B cell (primary cell): ENCODE measurements at regions of chr4 and their contacts with region 1.

Region 1: GRCh38 chr4:88523325-88524129 is at the start of gene PYURF:
- DNase-seq: peak; percentile 82
- ATAC-seq: peak; percentile 92
- H3K4me3 ChIP-seq: peak within 1 kb of the TSS; percentile 66 to 88 (median 68)
- H3K4me3 Mint-ChIP-seq: peak within 1 kb of the TSS; percentile 90
- H3K27ac ChIP-seq: peak within 1 kb of the TSS; percentile 28 to 70
- H3K27ac Mint-ChIP-seq: peak within 1 kb of the TSS; percentile 87
- H3K4me1 ChIP-seq: peaks cover 12 to 18% of the 10 kb centered on the region in 2 donors
- H3K4me1 Mint-ChIP-seq: peaks cover 20% of the 10 kb centered on the region
- H3K27me3 ChIP-seq: no peaks in the 10 kb centered on the region
- H3K27me3 Mint-ChIP-seq: no peaks in the 10 kb centered on the region
- CTCF ChIP-seq: no peak
- total RNA-seq, gene PYURF: 38.1 and 40.5 TPM in 2 replicates

Region 2: DNA sequence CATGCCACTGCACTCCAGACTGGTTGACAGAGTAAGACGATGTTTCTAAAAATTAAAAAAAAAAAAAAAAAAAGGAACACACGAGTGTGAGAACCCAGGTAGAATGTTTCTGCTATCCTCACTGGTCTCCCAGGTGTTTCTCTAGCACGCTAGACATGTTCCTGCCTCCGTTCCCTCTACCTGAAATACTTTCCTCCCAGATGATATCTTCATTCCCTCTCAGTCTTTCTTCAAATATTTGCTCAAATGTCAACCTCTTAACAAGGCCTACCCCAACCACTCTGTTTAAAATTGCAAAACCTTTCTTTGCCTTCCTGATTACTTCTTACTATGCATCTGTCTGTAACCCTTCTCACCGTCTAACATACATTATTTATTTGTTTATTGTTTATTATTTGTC is 305.6 kb before region 1 on chr4:
- CTCF ChIA-PET with region 1: interaction called, 506 read pairs
- POLR2A ChIA-PET with region 1: interaction called, 3 read pairs
- intact Hi-C with region 1: no loop called
- DNase-seq: no peak
- ATAC-seq: no peak
- H3K4me3 ChIP-seq: no peak overlapping the region
- H3K4me3 Mint-ChIP-seq: no peak overlapping the region
- H3K27ac ChIP-seq: no peak overlapping the region
- H3K27ac Mint-ChIP-seq: no peak overlapping the region
- H3K4me1 ChIP-seq: peaks cover 0 to 3% of the 10 kb centered on the region in 2 donors
- H3K4me1 Mint-ChIP-seq: peaks cover 5% of the 10 kb centered on the region
- H3K27me3 ChIP-seq: peaks cover 0 to 2% (median 0%) of the 10 kb centered on the region in 4 experiments
- H3K27me3 Mint-ChIP-seq: peaks cover 3% of the 10 kb centered on the region
- CTCF ChIP-seq: no peak

Region 3: GRCh38 chr4:88456757-88457306 is 66.7 kb before region 1 on chr4 and contains the start of gene HERC5:
- CTCF ChIA-PET with region 1: interaction called, 6 read pairs
- POLR2A ChIA-PET with region 1: no interaction called
- intact Hi-C with region 1: loop called (anchors 2 kb)
- DNase-seq: peak; percentile 96
- ATAC-seq: peak; percentile 94
- H3K4me3 ChIP-seq: peak within 1 kb of the TSS; percentile 69 to 93 (median 85)
- H3K4me3 Mint-ChIP-seq: peak within 1 kb of the TSS; percentile 100
- H3K27ac ChIP-seq: peak within 1 kb of the TSS; percentile 52 to 70
- H3K27ac Mint-ChIP-seq: peak within 1 kb of the TSS; percentile 99
- H3K4me1 ChIP-seq: peaks cover 11 to 16% of the 10 kb centered on the region in 2 donors
- H3K4me1 Mint-ChIP-seq: peaks cover 19% of the 10 kb centered on the region
- H3K27me3 ChIP-seq: no peaks in the 10 kb centered on the region
- H3K27me3 Mint-ChIP-seq: no peaks in the 10 kb centered on the region
- CTCF ChIP-seq: no peak
- total RNA-seq, gene HERC5: 10.6 and 12.0 TPM in 2 replicates

Region 4: DNA sequence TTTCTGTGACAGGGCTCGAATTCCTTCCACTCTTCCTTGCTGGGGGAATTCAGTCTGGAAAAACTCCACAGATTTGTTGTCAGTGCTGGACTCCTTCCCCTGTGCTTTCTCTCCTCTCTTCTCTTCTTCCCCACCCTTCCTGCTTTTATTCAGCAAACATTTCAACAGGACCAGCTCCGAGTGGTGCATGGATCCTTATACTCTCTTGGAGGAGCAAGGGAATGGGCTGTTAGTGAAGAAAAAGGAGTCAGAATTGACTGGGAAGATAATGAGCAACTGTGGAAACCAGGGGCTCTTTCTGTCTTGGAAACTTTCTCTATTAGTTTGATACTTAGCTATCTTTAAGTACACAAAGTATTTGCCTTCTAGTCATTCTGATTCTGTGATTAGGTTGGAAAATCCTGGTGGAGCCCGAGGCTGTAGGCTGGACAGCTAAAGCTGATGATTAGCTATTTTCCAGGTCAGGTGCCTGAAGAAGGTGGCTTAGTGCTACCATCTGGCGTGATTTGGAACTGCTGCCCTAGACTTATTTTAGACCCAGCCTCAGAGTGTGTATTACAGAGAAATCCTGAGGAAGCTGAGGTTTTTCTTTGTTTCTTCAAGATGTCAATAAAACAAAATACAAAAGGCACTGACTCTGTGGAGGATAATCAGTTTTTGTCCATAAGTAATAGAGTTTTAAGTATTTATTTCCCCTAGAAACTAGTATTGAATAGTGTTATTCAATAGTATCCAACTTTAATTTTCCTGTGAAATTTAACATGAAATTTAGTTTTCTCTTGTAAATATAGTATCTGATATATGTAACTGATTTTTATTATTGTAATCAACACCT is 135.7 kb after region 1 on chr4:
- CTCF ChIA-PET with region 1: interaction called, 3 read pairs
- POLR2A ChIA-PET with region 1: no interaction called
- intact Hi-C with region 1: loop called (anchors 1 kb)
- DNase-seq: peak; percentile 20
- ATAC-seq: no peak
- H3K4me3 ChIP-seq: no peak overlapping the region
- H3K4me3 Mint-ChIP-seq: no peak overlapping the region
- H3K27ac ChIP-seq: no peak overlapping the region
- H3K27ac Mint-ChIP-seq: no peak overlapping the region
- H3K4me1 ChIP-seq: no peaks in the 10 kb centered on the region
- H3K4me1 Mint-ChIP-seq: no peaks in the 10 kb centered on the region
- H3K27me3 ChIP-seq: no peaks in the 10 kb centered on the region
- H3K27me3 Mint-ChIP-seq: no peaks in the 10 kb centered on the region
- CTCF ChIP-seq: peak; percentile 56

Region 5: GRCh38 chr4:89110986-89111832 is 587.7 kb after region 1 on chr4 and contains the start of gene TIGD2:
- CTCF ChIA-PET with region 1: no interaction called
- POLR2A ChIA-PET with region 1: no interaction called
- intact Hi-C with region 1: loop called (anchors 1 kb)
- DNase-seq: peak; percentile 94
- ATAC-seq: peak; percentile 92
- H3K4me3 ChIP-seq: peak within 1 kb of the TSS; percentile 70 to 88 (median 82)
- H3K4me3 Mint-ChIP-seq: peak within 1 kb of the TSS; percentile 88
- H3K27ac ChIP-seq: peak within 1 kb of the TSS; percentile 30 to 85
- H3K27ac Mint-ChIP-seq: peak within 1 kb of the TSS; percentile 85
- H3K4me1 ChIP-seq: peaks cover 14 to 18% of the 10 kb centered on the region in 2 donors
- H3K4me1 Mint-ChIP-seq: peaks cover 27% of the 10 kb centered on the region
- H3K27me3 ChIP-seq: peaks cover 0 to 4% (median 1%) of the 10 kb centered on the region in 4 experiments
- H3K27me3 Mint-ChIP-seq: peaks cover 2% of the 10 kb centered on the region
- CTCF ChIP-seq: peak; percentile 94
- total RNA-seq, gene TIGD2: 8.6 and 9.5 TPM in 2 replicates